ENCODE measurements at regions of chr7 and their contacts with region 1.

Region 1: GRCh38 chr7:144437370-144438191 is 34.1 kb upstream of the NOBOX start:
- DNase-seq: peak; percentile 88
- ATAC-seq: peak; percentile 95
- H3K4me3 ChIP-seq: no peak overlapping the region
- H3K27ac ChIP-seq: no peak overlapping the region
- H3K4me1 ChIP-seq: no peaks in the 10 kb centered on the region
- H3K27me3 ChIP-seq: 0 out of 2 replicates have a peak, but pooled peaks cover 3% of the 10 kb centered on the region
- CTCF ChIP-seq: peak; percentile 83

Region 2: DNA sequence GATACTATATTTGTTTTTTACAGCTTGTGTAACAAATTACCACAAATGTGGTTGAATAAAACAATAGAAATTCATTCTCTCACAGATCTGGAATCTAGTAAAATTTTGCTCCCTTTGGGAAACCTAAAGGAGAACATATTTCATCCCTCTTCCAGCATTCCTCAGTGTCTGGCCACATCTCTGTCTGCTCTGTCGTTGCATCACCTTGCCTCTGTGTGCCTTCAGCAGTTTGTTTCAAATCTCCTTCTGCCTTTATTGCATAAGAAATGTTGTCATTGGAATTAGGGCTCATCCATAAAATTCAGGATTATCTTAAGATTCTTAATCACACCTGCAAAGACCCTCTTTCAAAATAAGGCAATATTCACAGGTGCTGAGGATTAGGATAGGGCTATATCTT is 300.1 kb before region 1 on chr7:
- CTCF ChIA-PET with region 1: no interaction called
- POLR2A ChIA-PET with region 1: no interaction called
- intact Hi-C with region 1: loop called (anchors 5 kb)
- DNase-seq: no peak
- ATAC-seq: no peak
- H3K4me3 ChIP-seq: no peak overlapping the region
- H3K27ac ChIP-seq: no peak overlapping the region
- H3K4me1 ChIP-seq: no peaks in the 10 kb centered on the region
- H3K27me3 ChIP-seq: peaks cover 5% of the 10 kb centered on the region; the same call in 1 of the 2 replicates
- CTCF ChIP-seq: no peak

Region 3: GRCh38 chr7:144404946-144405345 is 32.6 kb before region 1 on chr7:
- CTCF ChIA-PET with region 1: no interaction called
- POLR2A ChIA-PET with region 1: no interaction called
- intact Hi-C with region 1: loop called (anchors 5 kb)
- DNase-seq: no peak
- ATAC-seq: no peak
- H3K4me3 ChIP-seq: no peak overlapping the region
- H3K27ac ChIP-seq: no peak overlapping the region
- H3K4me1 ChIP-seq: no peaks in the 10 kb centered on the region
- H3K27me3 ChIP-seq: peaks cover 3% of the 10 kb centered on the region; the same call in 1 of the 2 replicates
- CTCF ChIP-seq: no peak